ENCODE measurements at regions of chr2 and their contacts with region 1.

Region 1: GRCh38 chr2:47767880-47768609 is 14.9 kb upstream of the MSH6 start:
- DNase-seq: peak; percentile 89

Region 2: DNA sequence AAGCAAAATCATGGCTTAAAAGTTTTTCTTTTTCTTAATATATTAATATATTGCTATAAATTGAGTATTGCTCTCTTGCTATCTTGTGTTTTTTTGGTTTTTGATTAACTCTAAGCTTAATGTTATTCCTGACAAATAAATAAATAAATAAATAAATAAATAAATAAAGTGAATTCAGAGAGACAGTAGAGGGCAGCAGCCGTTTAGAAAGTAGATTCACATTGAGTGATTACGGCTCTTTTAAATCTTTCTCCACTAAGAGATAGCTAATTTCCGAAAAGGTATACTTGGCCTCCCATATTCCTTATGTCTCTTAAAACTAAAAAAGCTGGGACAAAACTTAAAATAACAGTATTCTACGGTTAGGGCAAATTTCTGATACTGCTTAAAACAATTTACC is 330.8 kb before region 1 on chr2:
- intact Hi-C with region 1: loop called (anchors 2 kb)
- DNase-seq: no peak

Region 3: DNA sequence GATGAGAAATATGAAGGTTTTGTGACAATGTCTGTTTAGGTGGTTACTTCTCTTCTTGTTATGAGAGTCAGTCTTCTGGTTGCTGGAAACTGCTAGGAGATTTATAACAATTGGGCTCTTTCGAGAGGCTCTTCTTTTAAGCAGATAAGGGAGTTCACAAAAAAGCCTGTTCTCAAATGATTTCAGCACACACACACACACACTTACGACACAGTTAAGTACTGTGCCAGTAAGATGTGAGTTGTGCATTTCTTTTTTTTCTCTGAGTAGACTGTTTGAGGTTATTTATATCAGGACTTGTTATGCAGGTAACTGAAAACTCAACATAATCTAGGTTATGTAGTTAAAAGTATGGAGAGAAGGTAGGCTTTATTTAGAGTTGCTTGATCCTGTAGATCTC is 315.3 kb before region 1 on chr2:
- intact Hi-C with region 1: loop called (anchors 5 kb)
- DNase-seq: no peak

Region 4: DNA sequence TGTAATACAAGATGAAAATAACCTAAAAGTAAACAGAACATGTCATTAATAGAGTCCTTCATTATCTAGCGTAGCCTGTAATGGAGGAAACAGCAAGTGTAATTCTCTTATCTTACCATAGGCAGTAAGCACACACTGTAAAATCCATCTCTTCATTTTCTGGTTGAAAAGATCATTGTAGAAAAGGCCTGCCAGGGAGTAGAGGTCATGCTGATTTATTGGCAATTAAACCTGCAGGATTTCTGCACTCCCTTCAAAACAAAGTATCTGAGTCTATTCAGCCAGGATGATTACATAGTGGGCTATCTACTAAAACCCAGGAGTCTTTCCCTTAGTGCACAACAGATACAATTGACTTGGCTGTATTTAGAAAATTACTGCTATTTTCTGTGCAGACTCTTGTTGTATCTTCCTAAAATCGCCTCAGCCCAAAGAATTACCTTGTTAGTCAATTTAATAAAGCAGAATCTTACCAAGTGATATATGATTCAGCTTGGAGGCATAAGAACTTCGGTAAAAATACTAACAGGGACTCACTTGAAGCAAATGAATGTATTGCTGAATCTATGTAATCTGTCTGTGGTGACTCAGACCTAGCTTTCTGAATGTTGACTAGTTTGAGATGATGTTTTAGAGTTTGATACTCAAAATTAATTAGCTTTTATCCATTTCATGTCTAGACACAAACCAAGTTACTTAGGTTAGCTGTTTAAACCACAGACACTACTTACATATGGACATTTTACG is 511.5 kb after region 1 on chr2:
- intact Hi-C with region 1: no loop called
- DNase-seq: no peak

Measured in cardiac septum (tissue), 1 donor.